A673 (cell line): ENCODE measurements at regions of chr3 and their contacts with region 1.

Region 1: GRCh38 chr3:22555753-22556435 is 647.2 kb upstream of the UBE2E2 start:
- DNase-seq: no peak
- H3K4me3 ChIP-seq: no peak overlapping the region
- H3K27ac ChIP-seq: no peak overlapping the region
- H3K4me1 ChIP-seq: no peaks in the 10 kb centered on the region
- H3K27me3 ChIP-seq: no peaks in the 10 kb centered on the region
- CTCF ChIP-seq: no peak

Region 2: DNA sequence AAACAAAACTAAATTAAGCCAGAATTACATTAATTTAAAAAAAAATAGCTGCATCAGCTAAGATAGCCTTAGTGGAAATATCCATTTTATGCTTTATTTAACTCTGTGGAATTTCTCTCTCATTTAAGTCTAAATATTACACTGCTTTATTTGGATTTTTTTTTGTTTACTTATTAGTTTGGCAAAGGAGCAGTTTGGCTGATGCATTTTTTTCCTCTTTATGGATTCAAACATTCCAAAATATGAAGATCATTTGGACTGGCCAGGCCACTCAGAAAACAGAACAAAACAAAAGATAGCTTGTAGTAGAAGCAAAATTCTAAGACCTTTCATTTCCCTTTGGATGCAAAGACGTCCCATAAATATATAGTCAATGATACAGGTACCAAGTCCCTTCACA is 60.1 kb before region 1 on chr3:
- CTCF ChIA-PET with region 1: no interaction called
- POLR2A ChIA-PET with region 1: no interaction called
- intact Hi-C with region 1: no loop called
- DNase-seq: no peak
- H3K4me3 ChIP-seq: no peak overlapping the region
- H3K27ac ChIP-seq: no peak overlapping the region
- H3K4me1 ChIP-seq: no peaks in the 10 kb centered on the region
- H3K27me3 ChIP-seq: no peaks in the 10 kb centered on the region
- CTCF ChIP-seq: no peak

Region 3: GRCh38 chr3:22887664-22888291 is 331.9 kb after region 1 on chr3:
- CTCF ChIA-PET with region 1: no interaction called
- POLR2A ChIA-PET with region 1: no interaction called
- intact Hi-C with region 1: loop called (anchors 5 kb)
- DNase-seq: peak; percentile 3
- H3K4me3 ChIP-seq: no peak overlapping the region
- H3K27ac ChIP-seq: no peak overlapping the region
- H3K4me1 ChIP-seq: no peaks in the 10 kb centered on the region
- H3K27me3 ChIP-seq: no peaks in the 10 kb centered on the region
- CTCF ChIP-seq: peak; percentile 43